Ascending aorta (tissue), 2 donors: ENCODE measurements at regions of chr5 and their contacts with region 1.

Region 1: DNA sequence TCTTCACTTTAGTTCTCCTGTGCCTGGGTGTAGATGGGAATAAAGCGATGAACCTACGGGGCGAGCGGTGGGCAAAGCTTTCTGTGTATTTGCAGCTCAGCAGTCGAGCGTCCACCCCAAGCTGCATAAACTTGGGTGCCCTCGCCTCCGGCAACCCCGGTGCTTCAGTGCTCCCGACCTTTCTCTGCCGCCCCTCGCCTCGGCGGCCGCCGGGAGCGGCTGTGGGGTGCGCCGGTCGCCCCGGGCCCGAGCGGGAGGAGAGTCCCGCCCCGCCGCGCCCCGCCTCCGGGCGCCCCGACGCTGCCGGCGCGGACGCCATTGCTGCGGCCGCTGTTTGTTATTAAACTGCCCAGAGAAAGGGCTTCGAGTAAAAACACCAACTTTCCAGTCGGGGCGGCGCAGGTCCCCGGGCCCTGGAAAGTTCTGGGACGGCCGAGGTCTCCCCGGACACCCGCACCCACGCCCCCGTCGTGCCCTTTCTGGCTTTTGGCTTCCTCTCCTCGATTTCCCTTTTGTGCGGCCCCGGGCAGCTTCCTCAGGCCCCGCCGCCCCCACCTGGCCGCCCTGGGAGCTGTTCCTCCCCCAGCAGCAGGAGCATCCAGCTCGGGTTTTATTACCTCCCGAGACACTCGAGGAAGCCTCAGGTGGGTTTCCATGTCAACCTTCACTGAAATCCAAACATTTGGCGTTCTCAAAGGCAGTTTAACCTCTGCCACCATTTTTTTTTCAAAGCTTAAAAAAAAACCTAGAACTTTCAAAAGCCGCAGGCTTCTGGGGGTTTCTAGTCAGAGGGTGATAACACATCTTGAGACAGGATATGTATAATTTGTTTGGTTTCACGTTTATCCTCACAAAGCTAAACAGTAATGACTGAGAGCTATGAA is 334.3 kb downstream of the CWC27 start:
- DNase-seq: peak in 1 of 2 donors; percentile 69
- H3K4me3 ChIP-seq: peak overlapping the region; percentile 69 to 84
- H3K27ac ChIP-seq: peak overlapping the region; percentile 66 to 77
- H3K4me1 ChIP-seq: peaks cover 0 to 3% of the 10 kb centered on the region in 2 donors
- H3K27me3 ChIP-seq: no peaks in the 10 kb centered on the region
- CTCF ChIP-seq: peak in 1 of 3 experiments; percentile 48

Region 2: GRCh38 chr5:64958757-64959391 is 144.2 kb before region 1 on chr5:
- intact Hi-C with region 1: loop called (anchors 5 kb)
- DNase-seq: no peak
- H3K4me3 ChIP-seq: no peak overlapping the region
- H3K27ac ChIP-seq: no peak overlapping the region
- H3K4me1 ChIP-seq: no peaks in the 10 kb centered on the region
- H3K27me3 ChIP-seq: no peaks in the 10 kb centered on the region
- CTCF ChIP-seq: peak in 2 of 3 experiments; percentile 65 to 66

Region 3: DNA sequence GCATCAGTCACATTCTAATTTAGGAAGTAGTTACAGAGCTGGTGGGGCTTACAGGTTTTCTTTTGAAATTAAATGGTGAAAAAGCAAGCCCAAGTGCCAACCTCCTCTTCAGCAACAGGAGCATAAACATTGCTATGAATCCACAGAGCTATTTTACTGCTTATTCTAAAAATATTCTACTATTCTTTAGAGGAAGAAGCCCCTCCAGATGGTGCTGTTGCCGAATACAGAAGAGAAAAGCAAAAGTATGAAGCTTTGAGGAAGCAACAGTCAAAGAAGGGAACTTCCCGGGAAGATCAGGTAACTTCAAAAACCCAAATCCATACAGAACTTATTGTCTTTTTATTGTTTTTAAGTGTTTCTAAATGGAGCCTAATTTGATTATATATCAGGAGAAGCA is 131.6 kb before region 1 on chr5:
- intact Hi-C with region 1: loop called (anchors 5 kb)
- DNase-seq: no peak
- H3K4me3 ChIP-seq: no peak overlapping the region
- H3K27ac ChIP-seq: peak overlapping the region in 1 of 2 donors; percentile 46
- H3K4me1 ChIP-seq: peaks cover 3% of the 10 kb centered on the region in 2 donors
- H3K27me3 ChIP-seq: no peaks in the 10 kb centered on the region
- CTCF ChIP-seq: peak in 1 of 3 experiments; percentile 34

Region 4: GRCh38 chr5:65190328-65191053 is 87.4 kb after region 1 on chr5:
- intact Hi-C with region 1: loop called (anchors 10 kb)
- DNase-seq: no peak
- H3K4me3 ChIP-seq: no peak overlapping the region
- H3K27ac ChIP-seq: peak overlapping the region; percentile 50 to 74
- H3K4me1 ChIP-seq: no peaks in the 10 kb centered on the region
- H3K27me3 ChIP-seq: no peaks in the 10 kb centered on the region
- CTCF ChIP-seq: no peak

Region 5: GRCh38 chr5:65364907-65365306 is 261.8 kb after region 1 on chr5:
- intact Hi-C with region 1: loop called (anchors 10 kb)
- DNase-seq: no peak
- H3K4me3 ChIP-seq: peak overlapping the region in 1 of 2 donors; percentile 37
- H3K27ac ChIP-seq: peak overlapping the region; percentile 51 to 57
- H3K4me1 ChIP-seq: peaks cover 2 to 13% of the 10 kb centered on the region in 2 donors
- H3K27me3 ChIP-seq: no peaks in the 10 kb centered on the region
- CTCF ChIP-seq: no peak